ENCODE measurements at regions of chr17 and their contacts with region 1.

Region 1: DNA sequence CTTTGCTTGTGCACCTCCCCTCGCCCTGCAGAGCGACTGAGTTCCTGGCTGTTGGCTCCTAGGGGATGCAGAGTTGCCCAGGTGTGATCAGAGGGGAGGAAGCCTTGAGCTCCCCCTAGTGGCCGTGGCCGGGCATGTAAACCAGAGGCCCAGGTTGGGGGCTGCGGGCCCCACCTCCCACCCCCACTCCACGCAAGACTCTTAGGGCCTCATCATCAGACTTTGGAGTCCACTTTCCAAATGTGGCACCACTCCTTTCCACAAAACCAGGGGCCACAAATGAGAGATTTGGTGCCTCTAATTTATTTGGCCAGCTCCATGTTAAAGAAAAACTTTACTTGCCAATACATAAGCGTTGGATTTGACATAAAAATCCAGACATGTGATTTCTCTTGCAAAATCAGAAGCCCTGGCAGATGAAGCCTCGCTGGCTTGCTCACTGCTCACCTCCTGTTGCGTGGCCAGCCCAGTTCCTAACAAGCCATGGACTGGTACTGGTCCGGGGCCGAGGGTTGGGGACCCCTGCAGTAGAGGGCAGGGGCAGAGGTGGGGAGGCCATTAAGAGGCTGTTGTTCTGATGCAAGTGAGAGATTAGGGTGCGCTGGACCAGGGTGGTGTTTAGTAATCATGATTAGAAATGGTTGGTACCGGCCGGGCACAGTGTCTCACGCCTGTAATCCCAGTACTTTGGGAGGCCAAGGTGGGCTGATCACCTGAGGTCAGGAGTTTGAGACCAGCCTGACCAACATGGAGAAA is 28.7 kb upstream of the GAS7 start:
- DNase-seq: peak; percentile 46 to 92
- H3K4me3 ChIP-seq: no peak overlapping the region
- H3K27ac ChIP-seq: no peak overlapping the region
- H3K4me1 ChIP-seq: no peaks in the 10 kb centered on the region
- H3K27me3 ChIP-seq: no peaks in the 10 kb centered on the region
- CTCF ChIP-seq: peak; percentile 85 to 91 (median 85)
- EP300 ChIP-seq: no peak
- POLR2A ChIP-seq: no peak
- RAD21 ChIP-seq: peak; percentile 92 to 94

Region 2: DNA sequence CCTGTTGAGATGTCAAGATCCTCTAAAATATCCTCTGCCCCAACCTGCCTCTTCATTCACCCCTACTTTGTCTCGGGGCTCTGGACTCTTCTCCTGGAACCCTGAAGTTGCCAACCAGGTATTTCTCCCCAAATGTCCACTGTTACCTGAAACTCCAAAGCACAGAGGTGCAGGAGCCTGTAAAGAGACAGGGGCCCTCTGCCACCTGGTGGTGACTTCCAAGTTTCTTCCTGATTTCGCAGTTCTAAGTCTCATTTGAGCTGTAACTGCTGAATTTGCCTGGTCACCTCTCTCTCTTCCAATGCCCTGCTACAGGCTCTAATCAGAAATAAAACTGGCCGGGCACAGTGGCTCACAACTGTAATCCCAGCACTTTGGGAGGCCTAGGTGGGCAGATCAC is 244.9 kb before region 1 on chr17:
- CTCF ChIA-PET with region 1: interaction called, 34 read pairs
- POLR2A ChIA-PET with region 1: no interaction called
- DNase-seq: peak; percentile 25 to 61
- H3K4me3 ChIP-seq: no peak overlapping the region
- H3K27ac ChIP-seq: no peak overlapping the region
- H3K4me1 ChIP-seq: peaks cover 0 to 3% (median 0%) of the 10 kb centered on the region in 4 experiments; a peak in 2 of 7 replicates
- H3K27me3 ChIP-seq: no peaks in the 10 kb centered on the region
- CTCF ChIP-seq: peak; percentile 43 to 80 (median 69)
- EP300 ChIP-seq: no peak
- POLR2A ChIP-seq: no peak
- RAD21 ChIP-seq: peak; percentile 71 to 80

Region 3: GRCh38 chr17:10018461-10018891 is 208.6 kb before region 1 on chr17:
- CTCF ChIA-PET with region 1: interaction called, 11 read pairs
- POLR2A ChIA-PET with region 1: no interaction called
- DNase-seq: no peak
- H3K4me3 ChIP-seq: no peak overlapping the region
- H3K27ac ChIP-seq: no peak overlapping the region
- H3K4me1 ChIP-seq: peaks cover 0 to 10% (median 5%) of the 10 kb centered on the region in 4 experiments; a peak in 5 of 7 replicates
- H3K27me3 ChIP-seq: no peaks in the 10 kb centered on the region
- CTCF ChIP-seq: no peak
- EP300 ChIP-seq: no peak
- POLR2A ChIP-seq: no peak
- RAD21 ChIP-seq: no peak

Region 4: GRCh38 chr17:10186771-10187411 is 40.2 kb before region 1 on chr17:
- CTCF ChIA-PET with region 1: no interaction called
- POLR2A ChIA-PET with region 1: no interaction called
- DNase-seq: no peak
- H3K4me3 ChIP-seq: no peak overlapping the region
- H3K27ac ChIP-seq: no peak overlapping the region
- H3K4me1 ChIP-seq: peaks cover 0 to 8% (median 5%) of the 10 kb centered on the region in 4 experiments; a peak in 6 of 7 replicates
- H3K27me3 ChIP-seq: no peaks in the 10 kb centered on the region
- CTCF ChIP-seq: no peak
- EP300 ChIP-seq: no peak
- POLR2A ChIP-seq: no peak
- RAD21 ChIP-seq: no peak

Measured in H1 (cell line).